ENCODE measurements at regions of chr6 and their contacts with region 1.

Region 1: GRCh38 chr6:159008656-159009288 is 8.8 kb upstream of the RSPH3 start:
- DNase-seq: peak in 5 of 35 experiments; percentile 6 to 78 (median 27)
- ATAC-seq: peak; percentile 69 to 76 (median 74)
- H3K4me3 ChIP-seq: peak overlapping the region in 1 of 2 donors; percentile 37
- H3K4me3 Mint-ChIP-seq: peak overlapping the region; percentile 34 to 51 (median 40)
- H3K27ac ChIP-seq: peak overlapping the region; percentile 8
- H3K27ac Mint-ChIP-seq: peak overlapping the region; percentile 45 to 59
- H3K4me1 ChIP-seq: peaks cover 4 to 25% of the 10 kb centered on the region in 2 experiments
- H3K4me1 Mint-ChIP-seq: peaks cover 36 to 50% (median 38%) of the 10 kb centered on the region in 3 donors
- H3K27me3 ChIP-seq: no peaks in the 10 kb centered on the region
- H3K27me3 Mint-ChIP-seq: no peaks in the 10 kb centered on the region

Region 2: DNA sequence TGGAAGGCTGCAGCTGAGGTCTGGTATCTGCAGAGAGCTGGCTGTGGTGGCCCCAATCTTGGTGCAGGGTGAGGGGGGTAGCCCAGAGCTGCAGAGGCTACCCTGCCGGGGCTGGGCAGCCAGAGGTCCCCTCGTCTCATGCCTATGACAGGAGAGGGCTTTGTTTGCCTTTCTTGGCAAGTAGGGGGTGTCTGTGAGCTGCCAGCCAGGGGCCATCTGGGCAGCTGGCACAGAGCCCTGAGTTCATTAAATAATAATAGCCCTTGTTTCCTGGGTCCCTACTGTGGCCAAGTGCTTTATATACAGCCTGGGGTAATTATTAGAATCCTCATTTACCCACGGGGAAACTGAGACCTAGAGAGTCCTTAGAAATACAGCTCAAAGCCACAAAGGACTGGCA is 256.2 kb before region 1 on chr6:
- CTCF ChIA-PET with region 1: no interaction called
- POLR2A ChIA-PET with region 1: interaction called in 1 of 2 experiments, 10 read pairs
- DNase-seq: no peak
- ATAC-seq: no peak
- H3K4me3 ChIP-seq: no peak overlapping the region
- H3K4me3 Mint-ChIP-seq: no peak overlapping the region
- H3K27ac ChIP-seq: no peak overlapping the region
- H3K27ac Mint-ChIP-seq: no peak overlapping the region
- H3K4me1 ChIP-seq: no peaks in the 10 kb centered on the region
- H3K4me1 Mint-ChIP-seq: no peaks in the 10 kb centered on the region
- H3K27me3 ChIP-seq: no peaks in the 10 kb centered on the region
- H3K27me3 Mint-ChIP-seq: no peaks in the 10 kb centered on the region

Region 3: DNA sequence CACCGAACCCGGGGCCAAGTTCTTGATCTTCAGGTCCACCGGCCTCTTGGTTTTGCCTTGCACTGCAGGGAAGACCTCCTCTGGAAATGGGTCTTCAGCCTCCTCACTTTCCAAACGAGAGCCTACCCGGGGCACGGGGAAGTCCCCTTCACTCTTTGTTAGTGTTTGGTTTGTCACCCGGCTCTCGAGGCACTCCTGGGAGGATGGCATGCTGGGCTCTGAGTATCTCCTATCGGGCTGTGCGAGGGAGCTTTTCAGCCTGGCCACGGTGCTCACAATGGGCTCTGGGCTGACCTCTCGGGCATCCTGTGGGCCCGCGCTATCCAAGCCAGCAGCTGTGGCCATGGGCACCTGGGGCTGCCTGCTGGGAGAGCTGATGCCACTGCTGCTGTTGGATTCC is 27.9 kb after region 1 on chr6:
- CTCF ChIA-PET with region 1: interaction called, 4 to 43 read pairs
- POLR2A ChIA-PET with region 1: interaction called, 8 to 10 read pairs
- DNase-seq: peak in 6 of 35 experiments; percentile 7 to 44 (median 26)
- ATAC-seq: peak in 1 of 4 experiments; percentile 25
- H3K4me3 ChIP-seq: no peak overlapping the region
- H3K4me3 Mint-ChIP-seq: peak overlapping the region in 2 of 3 donors; percentile 31 to 47
- H3K27ac ChIP-seq: peak overlapping the region; percentile 16
- H3K27ac Mint-ChIP-seq: peak overlapping the region; percentile 61 to 83
- H3K4me1 ChIP-seq: peaks cover 35 to 53% of the 10 kb centered on the region in 2 experiments
- H3K4me1 Mint-ChIP-seq: peaks cover 66 to 76% (median 69%) of the 10 kb centered on the region in 3 donors
- H3K27me3 ChIP-seq: no peaks in the 10 kb centered on the region
- H3K27me3 Mint-ChIP-seq: no peaks in the 10 kb centered on the region

Region 4: DNA sequence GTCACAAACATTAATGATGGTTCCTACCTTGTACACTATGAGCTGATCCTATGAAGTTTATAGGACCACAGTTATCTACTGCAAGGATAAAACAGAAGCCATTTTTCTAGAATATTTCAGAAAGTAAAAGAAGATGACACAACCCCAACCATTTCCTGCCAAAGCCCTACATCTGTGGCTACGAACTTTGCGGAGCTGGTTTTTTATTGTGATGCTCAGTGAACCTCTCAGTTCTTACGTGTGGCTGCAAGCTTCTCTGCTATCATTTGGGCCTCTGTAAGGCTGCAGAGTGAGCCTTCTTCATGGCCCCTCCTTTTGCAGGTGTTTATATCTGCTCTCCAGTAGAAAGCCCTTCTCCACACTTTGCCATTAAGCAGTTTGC is 53.8 kb after region 1 on chr6:
- CTCF ChIA-PET with region 1: interaction called, 7 to 18 read pairs
- POLR2A ChIA-PET with region 1: no interaction called
- DNase-seq: peak; percentile 34 to 86 (median 67)
- ATAC-seq: peak; percentile 93 to 94 (median 94)
- H3K4me3 ChIP-seq: no peak overlapping the region
- H3K4me3 Mint-ChIP-seq: peak overlapping the region; percentile 52 to 77 (median 55)
- H3K27ac ChIP-seq: peak overlapping the region; percentile 94
- H3K27ac Mint-ChIP-seq: peak overlapping the region; percentile 98 to 99
- H3K4me1 ChIP-seq: peaks cover 36 to 74% of the 10 kb centered on the region in 2 experiments
- H3K4me1 Mint-ChIP-seq: peaks cover 92 to 97% (median 96%) of the 10 kb centered on the region in 3 donors
- H3K27me3 ChIP-seq: no peaks in the 10 kb centered on the region
- H3K27me3 Mint-ChIP-seq: no peaks in the 10 kb centered on the region

Region 5: GRCh38 chr6:159104163-159104925 is 95.6 kb after region 1 on chr6:
- CTCF ChIA-PET with region 1: interaction called, 27 to 130 read pairs
- POLR2A ChIA-PET with region 1: interaction called, 7 to 8 read pairs
- DNase-seq: peak; percentile 59 to 88 (median 74)
- ATAC-seq: peak; percentile 53 to 68 (median 66)
- H3K4me3 ChIP-seq: no peak overlapping the region
- H3K4me3 Mint-ChIP-seq: peak overlapping the region in 2 of 3 donors; percentile 44 to 70
- H3K27ac ChIP-seq: peak overlapping the region; percentile 53
- H3K27ac Mint-ChIP-seq: peak overlapping the region; percentile 86 to 95
- H3K4me1 ChIP-seq: peaks cover 53 to 75% of the 10 kb centered on the region in 2 experiments
- H3K4me1 Mint-ChIP-seq: peaks cover 76 to 91% (median 81%) of the 10 kb centered on the region in 3 donors
- H3K27me3 ChIP-seq: no peaks in the 10 kb centered on the region
- H3K27me3 Mint-ChIP-seq: no peaks in the 10 kb centered on the region

Region 6: DNA sequence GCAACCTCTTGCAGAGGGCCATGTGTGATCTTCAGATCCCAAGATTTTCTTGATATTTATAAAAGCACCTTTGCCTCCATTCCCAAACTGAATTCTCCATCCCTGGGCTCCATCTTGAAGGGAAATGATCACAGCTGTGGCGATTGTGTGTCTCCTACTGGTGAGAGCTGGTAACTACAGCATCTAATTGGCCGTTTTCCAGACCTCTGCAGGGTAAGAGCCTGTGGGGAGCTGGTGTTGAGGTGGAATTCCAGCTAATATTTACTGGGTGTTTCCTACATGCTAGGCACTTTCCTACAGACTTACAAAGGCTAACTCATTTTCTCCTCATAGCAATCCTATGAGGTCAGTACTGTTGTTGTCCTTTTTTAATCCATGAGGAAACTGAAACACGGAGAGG is 101.2 kb after region 1 on chr6:
- CTCF ChIA-PET with region 1: interaction called, 27 to 130 read pairs
- POLR2A ChIA-PET with region 1: interaction called, 7 to 8 read pairs
- DNase-seq: peak in 7 of 35 experiments; percentile 24 to 75 (median 31)
- ATAC-seq: no peak
- H3K4me3 ChIP-seq: no peak overlapping the region
- H3K4me3 Mint-ChIP-seq: no peak overlapping the region
- H3K27ac ChIP-seq: peak overlapping the region; percentile 87
- H3K27ac Mint-ChIP-seq: peak overlapping the region; percentile 91 to 92
- H3K4me1 ChIP-seq: peaks cover 35 to 69% of the 10 kb centered on the region in 2 experiments
- H3K4me1 Mint-ChIP-seq: peaks cover 61 to 79% (median 68%) of the 10 kb centered on the region in 3 donors
- H3K27me3 ChIP-seq: no peaks in the 10 kb centered on the region
- H3K27me3 Mint-ChIP-seq: no peaks in the 10 kb centered on the region

Region 7: DNA sequence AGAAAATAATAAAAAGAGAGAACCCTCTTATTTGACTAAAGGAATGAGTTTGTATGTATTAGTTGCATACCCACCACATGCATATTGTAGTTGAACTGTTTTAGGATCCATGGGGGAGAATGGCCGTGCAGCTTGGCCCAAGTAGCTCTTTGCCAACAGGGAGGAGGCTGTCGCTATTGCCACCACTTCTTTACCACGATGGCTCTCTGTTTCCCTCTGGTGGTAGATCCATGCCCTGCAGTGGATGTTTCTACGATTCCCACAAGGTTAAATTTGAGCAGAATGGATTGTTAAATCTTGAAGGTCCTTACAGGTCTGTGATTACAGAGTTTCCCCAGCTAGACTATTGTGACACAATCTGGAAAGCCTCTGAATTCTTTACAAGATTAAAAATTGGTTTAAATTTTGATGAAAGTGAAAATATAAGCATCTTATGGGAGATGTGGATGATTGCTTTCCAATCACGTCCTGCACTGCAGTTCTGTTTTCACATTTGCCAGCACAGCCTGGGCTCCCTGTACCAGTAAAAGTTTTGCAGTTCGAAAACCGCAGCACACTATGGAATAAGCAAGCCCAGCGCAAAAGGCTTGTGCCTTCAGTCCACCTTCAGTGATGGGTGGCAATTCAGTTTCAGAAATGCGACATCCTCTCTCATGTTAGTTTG is 126.1 kb after region 1 on chr6:
- CTCF ChIA-PET with region 1: interaction called, 39 to 162 read pairs
- POLR2A ChIA-PET with region 1: interaction called in 1 of 2 experiments, 5 read pairs
- DNase-seq: peak; percentile 39 to 88 (median 68)
- ATAC-seq: peak; percentile 85 to 92 (median 88)
- H3K4me3 ChIP-seq: no peak overlapping the region
- H3K4me3 Mint-ChIP-seq: no peak overlapping the region
- H3K27ac ChIP-seq: no peak overlapping the region
- H3K27ac Mint-ChIP-seq: no peak overlapping the region
- H3K4me1 ChIP-seq: no peaks in the 10 kb centered on the region
- H3K4me1 Mint-ChIP-seq: peaks cover 6 to 7% (median 6%) of the 10 kb centered on the region in 3 donors
- H3K27me3 ChIP-seq: peaks cover 0 to 16% of the 10 kb centered on the region in 2 experiments
- H3K27me3 Mint-ChIP-seq: peaks cover 0 to 6% of the 10 kb centered on the region in 2 donors

Region 8: DNA sequence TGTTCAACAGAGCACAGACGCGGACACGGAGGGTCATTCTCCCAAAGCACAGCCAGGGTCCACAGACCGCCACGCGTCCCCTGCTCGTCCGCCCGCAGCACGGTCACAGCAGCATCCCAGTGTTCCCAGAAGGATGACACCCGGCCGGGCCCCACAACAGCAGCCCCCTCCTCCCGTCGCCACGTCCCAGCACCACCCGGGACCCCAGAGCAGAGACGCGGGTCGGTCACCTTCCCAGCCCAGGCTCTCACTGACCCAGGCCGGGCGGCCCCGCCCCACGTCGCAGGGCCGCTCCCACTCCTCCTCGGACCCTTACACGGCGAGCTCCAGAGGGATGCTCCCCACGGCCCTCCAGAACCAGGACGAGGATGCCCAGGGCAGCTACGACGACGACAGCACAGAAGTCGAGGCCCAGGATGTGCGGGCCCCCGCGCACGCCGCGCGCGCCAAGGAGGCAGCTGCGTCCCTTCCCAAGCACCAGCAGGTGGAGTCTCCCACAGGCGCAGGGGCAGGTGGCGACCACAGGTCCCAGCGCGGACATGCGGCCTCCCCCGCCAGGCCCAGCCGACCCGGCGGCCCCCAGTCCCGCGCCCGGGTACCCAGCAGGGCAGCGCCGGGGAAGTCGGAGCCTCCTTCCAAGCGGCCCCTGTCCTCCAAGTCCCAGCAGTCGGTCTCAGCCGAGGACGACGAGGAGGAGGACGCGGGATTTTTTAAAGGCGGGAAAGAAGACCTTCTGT is 224.8 kb after region 1 on chr6:
- CTCF ChIA-PET with region 1: no interaction called
- POLR2A ChIA-PET with region 1: no interaction called
- DNase-seq: no peak
- ATAC-seq: no peak
- H3K4me3 ChIP-seq: no peak overlapping the region
- H3K4me3 Mint-ChIP-seq: no peak overlapping the region
- H3K27ac ChIP-seq: no peak overlapping the region
- H3K27ac Mint-ChIP-seq: no peak overlapping the region
- H3K4me1 ChIP-seq: no peaks in the 10 kb centered on the region
- H3K4me1 Mint-ChIP-seq: peaks cover 2 to 8% (median 3%) of the 10 kb centered on the region in 3 donors
- H3K27me3 ChIP-seq: peaks cover 10 to 31% of the 10 kb centered on the region in 2 experiments
- H3K27me3 Mint-ChIP-seq: peaks cover 25 to 54% of the 10 kb centered on the region in 2 donors

Measured in T-cell (primary cell).